BJ (cell line): ENCODE measurements at regions of chr4 and their contacts with region 1.

Region 1: DNA sequence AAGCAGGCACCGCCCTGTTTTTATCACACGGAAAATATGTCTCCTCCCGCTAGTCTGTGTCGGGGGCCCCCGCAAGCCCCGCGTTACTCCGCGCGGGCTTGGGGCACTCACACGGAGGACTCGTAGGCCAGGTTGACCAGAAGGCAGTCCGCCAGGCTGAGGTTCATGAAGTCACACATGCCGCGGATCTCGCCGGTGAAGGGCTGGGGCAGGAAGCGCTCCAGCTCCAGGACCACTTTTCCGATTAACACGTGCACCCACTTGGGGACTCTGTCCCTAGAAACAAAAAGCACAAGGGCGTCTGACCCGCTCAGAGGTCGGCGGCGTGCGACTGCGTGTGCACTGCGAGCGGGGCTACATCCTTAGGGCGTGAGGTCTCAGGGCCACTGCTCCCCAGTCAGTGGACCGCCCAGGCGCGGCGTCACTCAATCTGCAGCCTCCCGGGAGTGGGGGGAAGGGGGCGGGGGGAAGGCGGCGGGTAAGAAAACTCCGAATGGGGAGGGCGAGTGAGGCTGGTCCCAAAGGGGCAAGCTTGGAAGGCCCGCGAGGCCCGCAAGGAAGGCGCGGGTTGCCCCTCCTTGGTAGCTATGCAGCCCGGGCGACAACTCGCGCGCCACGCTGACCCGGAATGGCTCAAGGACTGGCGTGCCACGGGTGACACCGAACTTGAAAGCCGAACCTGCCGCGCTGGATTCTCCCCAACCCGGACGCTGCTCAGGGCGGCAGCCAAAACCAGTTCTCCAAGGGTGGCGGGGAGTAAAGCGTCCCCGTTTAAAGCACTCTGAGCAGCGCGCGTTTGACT is 722 bp downstream of the NAAA start:
- DNase-seq: no peak
- H3K4me3 ChIP-seq: peak overlapping the region; percentile 55
- H3K27me3 ChIP-seq: no peaks in the 10 kb centered on the region
- CTCF ChIP-seq: no peak

Region 2: DNA sequence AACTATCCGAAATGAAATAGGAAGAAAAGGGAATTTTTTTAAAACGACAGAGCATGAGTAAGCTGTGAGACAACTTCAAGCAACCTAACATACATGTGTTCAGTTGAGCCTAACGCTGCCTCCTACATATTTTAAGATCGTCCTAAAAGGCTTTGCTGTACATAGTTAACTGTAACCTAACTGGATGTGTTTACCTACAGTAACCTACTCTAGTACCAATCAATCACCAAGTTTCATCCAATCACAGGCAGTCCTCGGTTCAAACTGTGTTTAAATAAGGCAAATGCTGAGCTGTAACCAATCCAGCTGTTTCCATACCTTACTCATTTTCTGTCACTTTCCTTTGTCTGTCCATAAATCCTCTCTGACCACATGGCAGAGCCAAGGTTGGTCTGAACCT is 443.0 kb before region 1 on chr4:
- CTCF ChIA-PET with region 1: no interaction called
- POLR2A ChIA-PET with region 1: no interaction called
- DNase-seq: no peak
- H3K4me3 ChIP-seq: no peak overlapping the region
- H3K27me3 ChIP-seq: no peaks in the 10 kb centered on the region
- CTCF ChIP-seq: no peak

Region 3: DNA sequence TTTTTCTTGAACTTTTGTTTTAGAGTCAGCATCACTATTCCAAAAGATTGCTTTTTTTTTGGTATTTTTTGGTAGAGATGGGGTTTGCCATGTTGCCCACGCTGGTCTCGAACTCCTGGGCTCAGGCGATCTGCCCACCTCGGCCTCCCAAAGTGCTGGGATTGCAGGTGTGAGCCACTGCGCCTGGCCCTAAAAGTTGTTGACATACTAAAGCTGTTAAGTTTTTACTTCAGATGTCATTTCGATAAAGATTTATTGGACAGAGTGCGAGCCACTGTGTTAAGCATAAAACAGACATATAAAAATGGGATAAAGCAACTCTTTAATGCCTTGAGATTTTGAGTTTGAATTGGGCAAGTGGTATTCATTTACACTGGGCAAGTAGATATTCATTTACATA is 187.5 kb before region 1 on chr4:
- CTCF ChIA-PET with region 1: no interaction called
- POLR2A ChIA-PET with region 1: no interaction called
- DNase-seq: no peak
- H3K4me3 ChIP-seq: no peak overlapping the region
- H3K27me3 ChIP-seq: no peaks in the 10 kb centered on the region
- CTCF ChIP-seq: no peak

Region 4: DNA sequence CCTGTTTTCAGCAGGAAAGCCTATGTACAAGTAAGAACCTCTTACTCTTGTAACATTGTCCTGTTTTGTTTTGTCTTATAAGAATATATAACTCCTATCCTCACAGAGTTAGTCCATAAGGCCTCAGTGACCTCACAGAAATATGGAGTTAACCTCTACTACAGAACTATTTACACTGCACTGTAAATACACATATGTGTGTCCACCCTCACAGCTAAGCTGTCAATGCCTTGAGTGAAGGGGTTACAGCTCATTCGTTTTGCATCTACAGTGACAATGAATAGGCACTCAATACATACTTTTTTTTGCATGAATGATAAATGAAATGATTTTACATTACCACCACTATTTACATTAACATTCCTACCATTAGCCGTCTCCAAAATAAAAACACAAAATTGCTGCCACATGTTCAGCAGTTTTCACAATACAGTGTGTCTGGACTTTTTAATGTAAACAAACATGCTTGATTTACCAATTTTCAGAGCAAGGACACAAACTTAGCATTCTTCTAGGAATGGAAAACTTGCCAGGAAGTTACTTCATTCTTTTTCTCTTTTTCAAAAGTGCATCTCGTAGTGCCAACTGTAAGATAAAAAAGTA is 10.2 kb after region 1 on chr4:
- CTCF ChIA-PET with region 1: no interaction called
- POLR2A ChIA-PET with region 1: no interaction called
- DNase-seq: no peak
- H3K4me3 ChIP-seq: no peak overlapping the region
- H3K27me3 ChIP-seq: no peaks in the 10 kb centered on the region
- CTCF ChIP-seq: no peak

Region 5: GRCh38 chr4:75973766-75974165 is 33.7 kb after region 1 on chr4:
- CTCF ChIA-PET with region 1: no interaction called
- POLR2A ChIA-PET with region 1: interaction called, 12 read pairs
- DNase-seq: no peak
- H3K4me3 ChIP-seq: no peak overlapping the region
- H3K27me3 ChIP-seq: no peaks in the 10 kb centered on the region
- CTCF ChIP-seq: no peak